CD4-positive, alpha-beta T cell (primary cell): ENCODE measurements at regions of chr15 and their contacts with region 1.

Region 1: DNA sequence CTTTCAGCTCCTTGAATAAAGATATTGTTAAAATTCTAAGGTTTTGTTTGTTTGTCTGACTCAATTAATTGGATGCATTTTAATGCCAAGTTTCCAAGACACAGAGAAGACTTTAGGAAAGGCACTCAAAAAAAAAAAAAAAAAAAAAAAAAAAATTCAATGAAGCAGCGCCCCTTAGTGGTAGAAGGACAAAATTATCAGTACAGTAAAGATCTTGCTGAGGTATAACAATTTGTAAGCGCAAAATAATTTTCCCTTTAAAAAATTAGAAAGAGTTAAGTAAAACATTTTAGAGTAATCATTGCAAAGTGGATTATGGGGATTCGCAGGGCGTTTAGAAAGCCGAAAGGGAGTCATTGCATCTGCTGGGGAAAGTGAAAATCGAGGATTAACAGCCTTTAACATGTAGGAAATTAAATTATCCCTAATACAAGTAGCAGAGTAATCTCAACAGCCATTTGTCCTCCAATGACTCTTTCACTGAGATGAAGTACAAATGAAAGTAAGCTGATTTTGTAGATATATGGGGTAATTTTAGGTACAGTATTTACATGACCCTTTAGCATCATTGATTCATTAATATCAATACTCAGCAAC is 5.8 kb upstream of the DIS3L start:
- DNase-seq: peak in 3 of 14 experiments; percentile 24 to 68 (median 59)
- ATAC-seq: no peak
- H3K4me3 ChIP-seq: no peak overlapping the region
- H3K4me3 Mint-ChIP-seq: no peak overlapping the region
- H3K27ac ChIP-seq: no peak overlapping the region
- H3K27ac Mint-ChIP-seq: no peak overlapping the region
- H3K4me1 ChIP-seq: peaks cover 18% of the 10 kb centered on the region
- H3K4me1 Mint-ChIP-seq: peaks cover 27% of the 10 kb centered on the region
- H3K27me3 ChIP-seq: no peaks in the 10 kb centered on the region
- H3K27me3 Mint-ChIP-seq: no peaks in the 10 kb centered on the region
- CTCF ChIP-seq: peak; percentile 91

Region 2: DNA sequence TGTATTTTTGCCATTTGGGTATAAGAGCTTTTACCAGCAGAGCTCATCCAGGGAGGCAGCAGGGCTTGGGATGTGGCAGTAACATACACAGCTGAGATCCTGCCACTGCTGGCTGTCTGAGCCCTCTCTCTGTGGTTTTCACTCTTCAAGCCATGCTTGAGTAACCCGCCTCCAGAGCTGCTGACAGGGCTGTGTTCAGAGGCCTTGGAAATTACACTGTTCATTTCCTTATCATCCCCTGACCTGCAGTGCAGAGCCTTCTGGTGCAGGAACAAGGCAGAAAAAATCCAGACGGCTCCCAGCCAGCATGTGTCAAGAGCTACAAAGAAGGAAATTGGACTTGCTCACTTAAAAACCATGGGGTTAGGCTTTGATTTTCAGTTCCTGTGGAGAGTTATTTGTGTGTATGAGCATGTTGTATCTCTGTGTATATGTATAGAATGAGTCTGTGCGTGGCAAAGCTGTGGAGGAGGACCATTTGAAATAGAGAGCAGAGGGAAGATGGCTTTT is 1780.2 kb before region 1 on chr15:
- CTCF ChIA-PET with region 1: no interaction called
- POLR2A ChIA-PET with region 1: no interaction called
- intact Hi-C with region 1: no loop called
- DNase-seq: peak in 11 of 14 experiments; percentile 5 to 60 (median 22)
- ATAC-seq: peak; percentile 67
- H3K4me3 ChIP-seq: no peak overlapping the region
- H3K4me3 Mint-ChIP-seq: peak overlapping the region; percentile 34
- H3K27ac ChIP-seq: peak overlapping the region; percentile 18 to 34
- H3K27ac Mint-ChIP-seq: peak overlapping the region; percentile 89
- H3K4me1 ChIP-seq: peaks cover 41% of the 10 kb centered on the region
- H3K4me1 Mint-ChIP-seq: peaks cover 87% of the 10 kb centered on the region
- H3K27me3 ChIP-seq: no peaks in the 10 kb centered on the region
- H3K27me3 Mint-ChIP-seq: no peaks in the 10 kb centered on the region
- CTCF ChIP-seq: no peak

Region 3: GRCh38 chr15:65595960-65596359 is 691.6 kb before region 1 on chr15:
- CTCF ChIA-PET with region 1: no interaction called
- POLR2A ChIA-PET with region 1: no interaction called
- intact Hi-C with region 1: loop called in 1 of 2 experiments (anchors 10 kb)
- DNase-seq: peak in 4 of 14 experiments; percentile 23 to 51 (median 35)
- ATAC-seq: no peak
- H3K4me3 ChIP-seq: no peak overlapping the region
- H3K4me3 Mint-ChIP-seq: no peak overlapping the region
- H3K27ac ChIP-seq: no peak overlapping the region
- H3K27ac Mint-ChIP-seq: no peak overlapping the region
- H3K4me1 ChIP-seq: no peaks in the 10 kb centered on the region
- H3K4me1 Mint-ChIP-seq: no peaks in the 10 kb centered on the region
- H3K27me3 ChIP-seq: no peaks in the 10 kb centered on the region
- H3K27me3 Mint-ChIP-seq: no peaks in the 10 kb centered on the region
- CTCF ChIP-seq: no peak